Mammary epithelial cell (primary cell): ENCODE measurements at regions of chr3 and their contacts with region 1.

Region 1: DNA sequence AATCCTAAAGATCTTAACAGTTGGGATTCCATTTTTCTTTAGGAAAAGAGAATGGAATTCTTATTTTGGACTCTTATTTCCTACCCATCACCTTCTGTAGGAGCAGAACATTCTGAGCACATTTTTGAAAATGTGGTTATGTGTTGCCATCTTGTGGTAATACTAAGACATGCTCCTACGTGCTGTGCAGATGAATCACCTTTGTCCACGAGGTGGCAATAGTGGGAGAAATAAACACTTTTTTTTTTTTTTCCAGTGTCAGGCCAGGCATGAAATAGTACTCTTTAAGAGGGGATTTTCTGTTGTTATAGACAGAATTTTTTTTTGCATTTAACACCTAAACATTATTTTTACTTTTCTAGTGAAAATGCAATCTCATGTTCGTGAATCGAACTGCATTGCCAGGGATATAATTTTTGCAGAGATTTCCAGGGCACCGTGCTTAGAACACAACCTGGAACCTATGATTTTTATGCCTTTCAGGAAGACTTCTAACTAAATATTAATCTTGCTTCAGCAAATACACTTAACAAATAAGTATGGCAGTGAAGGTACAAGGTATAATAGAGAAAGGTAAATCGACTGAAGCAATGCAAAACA is 196.6 kb downstream of the GAP43 start:
- DNase-seq: peak; percentile 64
- H3K4me3 ChIP-seq: no peak overlapping the region
- H3K27ac ChIP-seq: no peak overlapping the region
- H3K4me1 ChIP-seq: peaks cover 10% of the 10 kb centered on the region
- H3K27me3 ChIP-seq: no peaks in the 10 kb centered on the region
- CTCF ChIP-seq: peak; percentile 97 to 100

Region 2: DNA sequence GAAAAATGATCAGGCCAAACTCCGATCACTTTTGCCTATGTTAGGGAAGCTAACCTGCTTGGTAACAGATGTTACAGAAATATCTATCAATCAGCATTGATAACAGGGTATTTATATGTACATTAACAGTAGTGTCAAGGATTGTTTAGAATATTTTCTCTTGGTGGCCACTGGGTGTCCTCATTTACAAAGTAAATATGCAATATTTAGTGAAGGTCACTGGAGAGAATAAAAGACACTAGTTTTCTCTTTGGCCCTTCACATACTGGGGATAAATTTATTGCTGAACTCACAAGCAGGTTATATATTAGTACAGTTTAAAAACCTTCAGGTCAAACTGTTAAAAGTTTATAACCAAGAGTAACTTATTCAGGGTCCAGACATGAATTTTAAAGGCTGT is 1457.1 kb before region 1 on chr3:
- CTCF ChIA-PET with region 1: no interaction called
- dilution Hi-C with region 1: no loop called
- in situ Hi-C with region 1: no loop called
- intact Hi-C with region 1: loop called (anchors 5 kb)
- DNase-seq: peak; percentile 21
- H3K4me3 ChIP-seq: no peak overlapping the region
- H3K27ac ChIP-seq: no peak overlapping the region
- H3K4me1 ChIP-seq: peaks cover 6% of the 10 kb centered on the region
- H3K27me3 ChIP-seq: no peaks in the 10 kb centered on the region
- CTCF ChIP-seq: peak; percentile 40 to 47

Region 3: DNA sequence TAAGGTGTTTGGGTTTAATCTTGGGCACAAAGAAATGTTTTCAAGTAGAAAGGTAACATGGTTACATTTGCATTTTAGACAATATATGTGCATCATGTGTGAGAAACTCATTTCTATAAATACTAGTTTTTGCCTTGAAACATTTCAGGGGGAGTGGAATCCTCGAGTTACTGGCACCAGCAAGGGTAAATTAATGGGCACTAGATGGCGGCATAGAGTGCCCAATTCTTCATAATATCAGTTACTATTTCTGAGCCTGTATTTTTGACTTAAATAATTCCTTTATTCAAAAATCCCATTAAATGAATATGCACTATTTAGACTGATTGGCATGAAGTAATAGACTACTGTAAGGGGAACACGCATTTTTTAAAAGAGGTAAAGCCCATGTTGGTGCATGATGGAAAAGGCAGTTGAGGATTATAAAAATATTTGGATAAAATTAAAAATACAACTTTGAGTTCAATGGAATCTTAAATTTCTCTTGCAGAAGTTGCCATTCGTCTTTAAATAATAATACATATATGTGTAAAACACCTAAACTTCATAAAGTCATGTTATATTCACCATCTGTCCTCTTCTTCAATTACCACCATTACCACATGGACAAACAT is 779.1 kb before region 1 on chr3:
- CTCF ChIA-PET with region 1: no interaction called
- dilution Hi-C with region 1: no loop called
- in situ Hi-C with region 1: no loop called
- intact Hi-C with region 1: loop called (anchors 5 kb)
- DNase-seq: peak; percentile 25
- H3K4me3 ChIP-seq: no peak overlapping the region
- H3K27ac ChIP-seq: no peak overlapping the region
- H3K4me1 ChIP-seq: no peaks in the 10 kb centered on the region
- H3K27me3 ChIP-seq: no peaks in the 10 kb centered on the region
- CTCF ChIP-seq: peak; percentile 72 to 78

Region 4: GRCh38 chr3:115217678-115218451 is 602.0 kb before region 1 on chr3:
- CTCF ChIA-PET with region 1: interaction called, 3 read pairs
- dilution Hi-C with region 1: no loop called
- in situ Hi-C with region 1: loop called (anchors 10 to 25 kb)
- intact Hi-C with region 1: loop called (anchors 1 kb)
- DNase-seq: peak; percentile 56
- H3K4me3 ChIP-seq: no peak overlapping the region
- H3K27ac ChIP-seq: no peak overlapping the region
- H3K4me1 ChIP-seq: no peaks in the 10 kb centered on the region
- H3K27me3 ChIP-seq: no peaks in the 10 kb centered on the region
- CTCF ChIP-seq: peak; percentile 72